ENCODE measurements at regions of chrX and their contacts with region 1.

Region 1: GRCh38 chrX:148049441-148049840 is 68.3 kb downstream of the FMR1NB start:
- DNase-seq: no peak
- ATAC-seq: no peak
- H3K4me3 Mint-ChIP-seq: no peak overlapping the region
- H3K27ac Mint-ChIP-seq: no peak overlapping the region
- H3K4me1 Mint-ChIP-seq: no peaks in the 10 kb centered on the region
- H3K27me3 Mint-ChIP-seq: peaks cover 3% of the 10 kb centered on the region
- CTCF ChIP-seq: no peak

Region 2: GRCh38 chrX:148947515-148947914 is 898.1 kb after region 1 on chrX:
- CTCF ChIA-PET with region 1: no interaction called
- POLR2A ChIA-PET with region 1: no interaction called
- intact Hi-C with region 1: no loop called
- DNase-seq: no peak
- ATAC-seq: no peak
- H3K4me3 Mint-ChIP-seq: no peak overlapping the region
- H3K27ac Mint-ChIP-seq: no peak overlapping the region
- H3K4me1 Mint-ChIP-seq: no peaks in the 10 kb centered on the region
- H3K27me3 Mint-ChIP-seq: no peaks in the 10 kb centered on the region
- CTCF ChIP-seq: no peak

Region 3: DNA sequence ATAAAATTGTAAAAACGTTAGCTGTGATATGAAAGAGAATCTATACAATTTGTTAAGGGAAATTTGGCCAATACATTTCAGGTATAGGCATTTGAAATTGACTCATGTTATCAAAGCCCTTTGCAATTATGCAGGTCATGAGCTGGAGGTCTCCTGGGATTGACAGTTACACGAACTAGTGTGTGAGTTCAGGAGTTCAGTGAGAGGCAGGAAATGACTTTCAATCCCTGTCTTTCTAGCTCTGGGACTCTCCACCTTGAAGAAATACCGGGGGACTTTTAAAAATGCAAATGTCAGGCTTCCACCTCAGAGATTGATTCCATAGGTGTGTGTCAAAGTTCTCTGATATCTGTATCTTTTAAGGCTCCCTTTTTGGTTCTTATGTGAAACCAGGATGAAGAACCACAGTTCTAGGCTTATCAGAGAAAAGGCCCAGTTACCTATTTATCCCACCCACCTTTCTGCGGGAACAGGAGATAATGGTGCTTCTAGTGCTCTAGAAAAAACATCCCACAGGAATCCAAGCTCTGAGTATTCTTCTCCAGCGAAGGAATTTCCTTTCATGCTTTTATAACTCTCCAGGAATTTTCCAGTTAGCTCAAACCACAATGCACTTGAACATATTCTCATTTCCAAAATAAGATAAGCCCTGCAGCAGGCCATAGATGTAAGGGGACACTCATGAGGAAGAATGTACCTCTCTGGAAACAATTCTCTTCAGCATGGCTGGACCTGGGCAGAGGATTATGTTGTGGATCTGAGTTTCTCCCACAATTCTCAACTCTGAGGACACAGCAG is 954.6 kb after region 1 on chrX:
- CTCF ChIA-PET with region 1: interaction called, 6 read pairs
- POLR2A ChIA-PET with region 1: no interaction called
- intact Hi-C with region 1: loop called (anchors 10 kb)
- DNase-seq: no peak
- ATAC-seq: no peak
- H3K4me3 Mint-ChIP-seq: no peak overlapping the region
- H3K27ac Mint-ChIP-seq: no peak overlapping the region
- H3K4me1 Mint-ChIP-seq: no peaks in the 10 kb centered on the region
- H3K27me3 Mint-ChIP-seq: no peaks in the 10 kb centered on the region
- CTCF ChIP-seq: no peak

Region 4: DNA sequence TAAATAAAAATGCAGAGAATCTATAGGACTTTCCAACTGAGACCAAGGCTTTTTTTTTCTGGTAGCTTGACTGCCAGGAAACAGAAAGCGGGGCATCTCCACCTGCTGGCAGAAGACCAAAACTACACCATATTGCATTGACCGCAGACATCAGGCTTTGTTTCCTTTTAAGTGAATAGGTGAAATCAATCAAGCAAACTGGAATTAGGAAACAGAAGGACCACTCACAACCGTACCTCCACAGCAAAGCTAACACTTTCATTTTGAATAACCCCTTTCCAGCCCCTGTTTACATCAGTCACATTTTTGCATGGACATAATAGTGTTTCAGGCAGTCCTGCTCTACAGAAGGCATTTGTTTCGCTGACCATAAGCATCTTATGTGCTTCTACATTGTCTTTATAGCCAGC is 1237.5 kb after region 1 on chrX:
- CTCF ChIA-PET with region 1: interaction called, 24 read pairs
- POLR2A ChIA-PET with region 1: no interaction called
- intact Hi-C with region 1: loop called (anchors 1 kb)
- DNase-seq: no peak
- ATAC-seq: no peak
- H3K4me3 Mint-ChIP-seq: no peak overlapping the region
- H3K27ac Mint-ChIP-seq: no peak overlapping the region
- H3K4me1 Mint-ChIP-seq: no peaks in the 10 kb centered on the region
- H3K27me3 Mint-ChIP-seq: peaks cover 2% of the 10 kb centered on the region
- CTCF ChIP-seq: no peak

Region 5: DNA sequence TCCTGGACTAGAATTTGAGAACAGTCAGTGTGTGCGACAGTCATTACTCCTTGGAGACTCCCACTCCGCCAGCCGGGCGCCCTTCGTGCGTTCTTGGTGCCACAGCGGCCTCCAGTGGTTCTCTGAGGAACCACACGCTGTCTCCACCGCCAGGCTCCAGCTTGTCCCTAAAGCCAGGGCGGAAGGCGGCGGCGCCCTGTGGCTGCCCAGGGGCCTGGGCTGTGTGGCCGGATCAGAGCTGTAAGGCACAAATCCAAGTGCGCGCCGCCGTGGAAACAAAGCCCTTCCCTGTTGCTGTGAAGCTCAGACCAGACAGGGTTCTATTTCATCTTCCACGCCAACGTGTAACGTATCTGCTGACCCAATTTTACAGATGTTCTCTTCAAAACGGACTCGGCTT is 1421.5 kb after region 1 on chrX:
- CTCF ChIA-PET with region 1: interaction called, 16 read pairs
- POLR2A ChIA-PET with region 1: no interaction called
- intact Hi-C with region 1: loop called (anchors 1 kb)
- DNase-seq: peak; percentile 34
- ATAC-seq: peak; percentile 70
- H3K4me3 Mint-ChIP-seq: no peak overlapping the region
- H3K27ac Mint-ChIP-seq: no peak overlapping the region
- H3K4me1 Mint-ChIP-seq: peaks cover 3% of the 10 kb centered on the region
- H3K27me3 Mint-ChIP-seq: peaks cover 3% of the 10 kb centered on the region
- CTCF ChIP-seq: no peak

Measured in activated B cell treated with CpG ODN at 0.5 μM for 24 hours (primary cell).